GM10248 (cell line): ENCODE measurements at regions of chr1 and their contacts with region 1.

Region 1: GRCh38 chr1:178659789-178660208 is 65.2 kb upstream of the RALGPS2 start:
- DNase-seq: peak; percentile 51
- CTCF ChIP-seq: no peak

Region 2: DNA sequence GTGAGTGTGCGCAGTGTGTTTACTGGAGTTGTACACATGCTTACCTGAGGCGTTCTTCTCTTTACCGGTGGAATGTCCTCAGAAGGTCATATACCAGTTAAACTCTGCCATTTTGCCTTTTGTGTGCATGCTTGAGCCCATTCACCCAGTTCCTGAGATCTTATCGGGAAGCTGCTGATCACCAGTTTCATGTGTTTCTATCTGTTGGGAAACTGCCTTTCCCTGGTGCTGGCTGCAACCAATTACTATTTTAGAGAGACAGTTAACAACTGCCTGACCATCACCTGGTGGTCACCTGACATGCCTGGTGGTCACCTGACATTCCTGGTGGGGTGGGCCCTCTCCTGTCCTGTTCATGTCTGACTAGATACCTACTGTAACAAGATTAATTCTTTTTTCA is 428.9 kb before region 1 on chr1:
- CTCF ChIA-PET with region 1: no interaction called
- POLR2A ChIA-PET with region 1: interaction called, 11 read pairs
- DNase-seq: no peak
- CTCF ChIP-seq: no peak

Region 3: DNA sequence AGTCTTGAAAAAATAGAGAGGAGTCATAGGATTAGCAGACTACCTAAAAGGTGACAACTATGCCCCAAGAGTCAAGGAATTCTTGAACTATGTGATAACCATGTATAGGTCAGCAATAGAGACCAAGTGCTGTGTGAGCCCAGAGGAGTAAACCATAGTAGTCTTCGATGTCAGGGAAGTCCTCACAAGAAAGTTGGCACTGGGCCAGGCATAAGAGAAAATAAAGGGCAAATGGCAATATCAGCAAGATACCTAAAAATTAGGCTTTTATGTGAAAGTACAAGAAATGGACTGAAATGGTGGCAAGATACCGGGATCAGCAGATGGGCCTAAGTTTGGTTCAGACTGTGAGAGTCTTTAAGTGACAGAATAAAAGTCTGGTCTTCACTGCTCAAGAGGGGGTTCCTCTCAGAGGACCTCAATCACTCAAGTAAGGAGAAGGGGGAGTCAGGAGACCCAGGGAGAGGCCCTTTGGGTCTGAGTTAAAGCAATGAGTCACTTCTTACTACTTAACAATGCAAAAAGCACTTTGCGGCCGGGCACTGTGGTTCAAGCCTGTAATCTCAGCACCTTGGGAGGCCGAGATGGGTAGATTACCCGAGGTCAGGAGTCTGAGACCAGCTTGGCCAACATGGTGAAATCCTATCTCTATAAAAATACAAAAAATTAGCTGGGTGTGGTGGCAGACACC is 51.9 kb before region 1 on chr1:
- CTCF ChIA-PET with region 1: no interaction called
- POLR2A ChIA-PET with region 1: interaction called, 10 read pairs
- DNase-seq: peak; percentile 33
- CTCF ChIP-seq: no peak

Region 4: DNA sequence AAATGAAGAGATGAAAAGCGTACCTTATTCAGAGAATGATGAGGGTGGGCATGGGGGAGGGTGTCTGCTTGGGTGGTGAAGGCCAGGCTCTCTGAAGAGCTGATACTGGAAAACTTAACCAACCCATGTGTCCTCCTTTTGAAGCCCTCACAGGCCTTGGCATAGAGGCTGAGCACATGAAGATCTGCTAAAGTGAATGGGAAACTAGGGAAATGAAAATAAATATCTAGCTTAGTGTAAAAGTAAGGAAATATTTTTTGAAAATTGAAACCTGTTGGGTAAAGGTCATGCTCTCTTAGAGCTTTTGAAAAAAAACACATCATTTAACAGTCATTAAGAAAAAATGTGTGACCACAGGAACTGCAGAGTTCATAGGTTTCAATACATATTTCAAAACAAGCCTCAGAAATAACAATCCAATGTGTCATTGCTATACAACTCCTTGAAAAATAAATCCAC is 24.8 kb after region 1 on chr1:
- CTCF ChIA-PET with region 1: no interaction called
- POLR2A ChIA-PET with region 1: no interaction called
- DNase-seq: peak; percentile 24
- CTCF ChIP-seq: no peak